Activated CD8-positive, alpha-beta T cell treated with anti-CD3 and anti-CD28 coated beads, Interleukin-2, amount 10 ng/mL, durations not matched to agents 7 days and 5 days (primary cell): ENCODE measurements at regions of chr1 and their contacts with region 1.

Region 1: DNA sequence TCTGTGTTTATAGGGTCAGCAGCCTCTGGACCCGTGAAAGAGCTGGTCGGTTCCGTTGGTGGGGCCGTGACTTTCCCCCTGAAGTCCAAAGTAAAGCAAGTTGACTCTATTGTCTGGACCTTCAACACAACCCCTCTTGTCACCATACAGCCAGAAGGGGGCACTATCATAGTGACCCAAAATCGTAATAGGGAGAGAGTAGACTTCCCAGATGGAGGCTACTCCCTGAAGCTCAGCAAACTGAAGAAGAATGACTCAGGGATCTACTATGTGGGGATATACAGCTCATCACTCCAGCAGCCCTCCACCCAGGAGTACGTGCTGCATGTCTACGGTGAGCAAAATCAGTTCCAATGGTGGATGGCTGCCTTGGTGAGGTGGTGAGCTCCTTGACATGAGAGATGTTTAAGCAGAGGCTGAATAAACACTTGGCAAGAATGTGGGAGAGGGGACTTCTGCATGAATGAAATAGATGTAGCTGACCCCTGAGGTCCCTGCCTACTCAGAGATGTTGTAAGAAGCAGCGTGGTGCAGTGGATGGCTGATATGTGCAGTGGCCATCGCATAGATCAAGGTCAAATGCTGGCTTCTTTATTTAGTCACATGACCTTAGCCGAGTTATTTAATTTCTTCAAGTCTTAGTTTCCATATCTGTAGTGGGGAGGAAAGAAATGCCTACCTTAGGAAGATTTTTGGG is 9.3 kb downstream of the SLAMF7 start:
- DNase-seq: no peak
- ATAC-seq: no peak
- H3K4me3 Mint-ChIP-seq: no peak overlapping the region
- H3K27ac Mint-ChIP-seq: peak overlapping the region; percentile 40
- H3K4me1 Mint-ChIP-seq: peaks cover 96% of the 10 kb centered on the region
- H3K27me3 Mint-ChIP-seq: no peaks in the 10 kb centered on the region

Region 2: GRCh38 chr1:160711602-160712311 is 36.6 kb before region 1 on chr1 and contains the start of gene CD48:
- CTCF ChIA-PET with region 1: interaction called, 21 read pairs
- POLR2A ChIA-PET with region 1: interaction called, 7 read pairs
- DNase-seq: peak; percentile 79
- ATAC-seq: peak; percentile 48
- H3K4me3 Mint-ChIP-seq: no peak within 1 kb of the TSS
- H3K27ac Mint-ChIP-seq: no peak within 1 kb of the TSS
- H3K4me1 Mint-ChIP-seq: peaks cover 39% of the 10 kb centered on the region
- H3K27me3 Mint-ChIP-seq: no peaks in the 10 kb centered on the region
- total RNA-seq, gene CD48: 325 to 327 TPM

Region 3: DNA sequence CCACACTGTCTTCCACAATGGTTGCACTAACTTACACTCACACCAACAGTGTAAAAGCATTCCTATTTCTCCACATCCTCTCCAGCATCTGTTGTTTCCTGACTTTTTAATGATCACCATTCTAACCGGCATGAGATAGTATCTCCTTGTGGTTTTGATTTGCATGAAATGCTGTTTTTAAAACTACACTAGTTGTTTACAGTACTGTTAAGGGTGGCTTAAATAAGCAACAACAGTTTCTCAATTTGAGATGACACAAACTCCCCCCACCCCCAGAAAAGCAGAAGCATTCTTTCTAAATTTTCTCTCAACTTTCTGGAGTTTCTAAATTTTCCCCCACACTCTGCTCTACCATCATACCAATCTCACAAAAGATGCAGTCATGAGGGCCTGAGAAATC is 16.3 kb before region 1 on chr1:
- CTCF ChIA-PET with region 1: interaction called, 27 read pairs
- POLR2A ChIA-PET with region 1: interaction called, 3 read pairs
- DNase-seq: no peak
- ATAC-seq: no peak
- H3K4me3 Mint-ChIP-seq: no peak overlapping the region
- H3K27ac Mint-ChIP-seq: no peak overlapping the region
- H3K4me1 Mint-ChIP-seq: peaks cover 39% of the 10 kb centered on the region
- H3K27me3 Mint-ChIP-seq: no peaks in the 10 kb centered on the region

Region 4: GRCh38 chr1:160761886-160762285 is 13.6 kb after region 1 on chr1:
- CTCF ChIA-PET with region 1: interaction called, 217 read pairs
- POLR2A ChIA-PET with region 1: interaction called, 33 read pairs
- DNase-seq: no peak
- ATAC-seq: no peak
- H3K4me3 Mint-ChIP-seq: no peak overlapping the region
- H3K27ac Mint-ChIP-seq: no peak overlapping the region
- H3K4me1 Mint-ChIP-seq: peaks cover 32% of the 10 kb centered on the region
- H3K27me3 Mint-ChIP-seq: no peaks in the 10 kb centered on the region

Region 5: GRCh38 chr1:160777486-160778089 is 29.3 kb after region 1 on chr1:
- CTCF ChIA-PET with region 1: interaction called, 217 read pairs
- POLR2A ChIA-PET with region 1: interaction called, 3 read pairs
- DNase-seq: peak; percentile 66
- ATAC-seq: peak; percentile 76
- H3K4me3 Mint-ChIP-seq: no peak overlapping the region
- H3K27ac Mint-ChIP-seq: peak overlapping the region; percentile 26
- H3K4me1 Mint-ChIP-seq: peaks cover 40% of the 10 kb centered on the region
- H3K27me3 Mint-ChIP-seq: no peaks in the 10 kb centered on the region

Region 6: DNA sequence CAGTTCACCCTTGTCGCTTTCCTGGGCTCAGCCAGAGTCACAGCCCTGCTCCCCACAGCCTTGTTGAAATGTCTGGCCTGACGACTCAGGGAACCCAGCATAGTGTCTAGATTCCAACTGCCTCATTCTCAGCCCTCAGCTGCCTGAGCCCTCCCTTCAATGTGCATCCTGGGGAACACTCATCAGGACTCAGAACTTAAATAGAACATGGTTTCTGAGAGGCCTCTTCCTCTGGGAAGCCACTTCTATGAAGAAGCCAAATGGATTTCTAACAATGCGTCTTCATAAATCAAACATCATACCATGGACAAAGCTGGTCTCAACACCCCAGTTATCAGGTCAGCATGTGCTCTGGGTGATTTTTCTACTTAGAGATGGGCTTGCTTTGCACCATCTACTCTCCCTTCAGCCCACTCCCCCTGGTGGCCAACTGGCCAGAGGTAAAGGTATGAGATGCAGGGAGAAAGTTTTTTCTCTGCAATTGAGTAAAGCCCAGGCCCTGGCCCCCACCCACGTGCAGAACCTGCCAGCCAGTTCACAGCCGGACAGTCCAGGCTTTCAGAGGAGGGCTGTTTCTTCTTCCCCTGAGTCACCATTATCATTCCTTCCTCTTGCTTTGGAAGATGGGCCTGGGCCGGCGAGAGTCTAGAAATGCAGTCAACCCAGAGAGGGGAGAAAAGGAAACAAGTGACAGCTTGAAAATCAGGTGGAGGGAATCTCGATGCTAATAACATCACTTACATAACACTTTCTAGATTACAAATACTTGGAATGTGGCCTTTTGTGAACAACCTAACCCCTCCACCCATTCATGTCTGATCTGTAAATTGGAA is 82.2 kb after region 1 on chr1:
- CTCF ChIA-PET with region 1: interaction called, 12 read pairs
- POLR2A ChIA-PET with region 1: no interaction called
- DNase-seq: peak; percentile 87
- ATAC-seq: peak; percentile 83
- H3K4me3 Mint-ChIP-seq: no peak overlapping the region
- H3K27ac Mint-ChIP-seq: no peak overlapping the region
- H3K4me1 Mint-ChIP-seq: peaks cover 40% of the 10 kb centered on the region
- H3K27me3 Mint-ChIP-seq: no peaks in the 10 kb centered on the region